ENCODE measurements at regions of chr4 and their contacts with region 1.

Region 1: DNA sequence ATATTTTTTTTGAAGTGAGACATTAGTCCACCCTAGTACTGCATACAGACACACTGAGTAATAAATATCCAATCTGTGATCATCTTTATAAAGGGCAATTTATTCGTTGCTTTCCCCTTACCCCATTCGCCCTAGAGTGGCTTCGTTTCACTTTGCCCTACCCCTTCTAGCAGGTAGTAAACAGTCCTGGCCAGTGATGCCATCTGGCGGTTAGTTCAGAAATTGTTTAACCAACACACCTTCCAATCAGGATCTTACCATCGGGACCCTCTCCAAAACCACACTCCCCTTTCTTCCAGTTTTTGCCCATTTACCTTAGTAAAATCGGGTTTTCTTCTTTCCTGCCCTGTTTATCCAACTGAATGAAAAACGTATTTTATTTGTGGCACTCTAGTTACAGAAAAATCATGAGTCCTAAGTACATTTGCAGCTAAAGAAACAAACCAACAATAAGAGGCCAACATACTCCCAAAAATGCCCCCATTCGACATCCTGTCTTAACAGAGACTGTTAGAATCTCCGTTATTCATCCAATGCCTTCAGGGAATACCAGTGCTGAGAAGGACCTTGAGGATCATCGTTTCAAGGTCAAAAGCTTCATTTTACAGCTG is 2.2 kb downstream of the PPA2 start:
- DNase-seq: peak; percentile 88
- H3K4me3 Mint-ChIP-seq: peak overlapping the region; percentile 96
- H3K27ac Mint-ChIP-seq: peak overlapping the region; percentile 98
- H3K4me1 Mint-ChIP-seq: peaks cover 44% of the 10 kb centered on the region
- H3K27me3 Mint-ChIP-seq: no peaks in the 10 kb centered on the region

Region 2: DNA sequence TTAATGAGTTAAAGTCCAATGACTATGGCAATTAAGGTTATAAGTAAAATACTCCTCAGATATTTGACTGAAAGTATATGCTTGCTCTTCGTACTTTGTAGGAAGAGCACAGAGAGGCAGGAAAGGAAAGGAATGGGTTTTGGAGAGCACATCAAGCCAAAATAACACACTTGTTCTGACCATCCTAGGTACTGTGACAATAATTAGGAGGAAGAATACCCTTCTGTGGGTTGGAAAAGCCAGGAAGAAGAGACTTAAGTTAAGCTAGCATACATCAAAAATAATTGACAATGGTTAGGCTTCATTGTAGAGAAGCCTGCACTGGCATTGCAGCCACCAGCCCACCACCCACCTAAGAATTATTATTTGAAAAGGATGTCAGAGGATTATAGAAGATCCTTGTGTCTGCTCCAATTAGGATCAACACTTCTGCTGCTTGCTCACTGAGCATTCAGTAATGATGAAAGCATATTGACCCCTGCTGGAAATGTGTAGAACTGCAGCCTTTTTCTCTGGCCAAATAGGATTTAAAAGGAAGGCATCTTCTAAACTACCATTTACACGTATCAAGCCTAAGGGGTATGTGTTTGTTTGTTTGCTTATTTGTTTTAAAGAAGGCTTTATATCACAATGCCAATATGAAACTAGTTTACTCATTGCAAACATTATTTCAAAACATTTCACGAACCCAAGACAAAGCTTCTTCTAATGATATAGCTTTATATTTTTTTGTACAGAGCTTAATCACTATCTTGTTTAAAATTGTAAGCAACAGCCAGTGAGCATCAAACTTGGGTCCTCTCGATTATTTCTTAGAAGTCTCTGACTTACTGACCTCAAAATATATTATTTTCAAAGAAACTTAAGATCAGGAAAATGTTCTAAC is 611.2 kb before region 1 on chr4:
- CTCF ChIA-PET with region 1: no interaction called
- intact Hi-C with region 1: loop called (anchors 5 kb)
- DNase-seq: peak; percentile 66
- H3K4me3 Mint-ChIP-seq: no peak overlapping the region
- H3K27ac Mint-ChIP-seq: no peak overlapping the region
- H3K4me1 Mint-ChIP-seq: no peaks in the 10 kb centered on the region
- H3K27me3 Mint-ChIP-seq: no peaks in the 10 kb centered on the region

Region 3: GRCh38 chr4:104966349-104967033 is 505.2 kb before region 1 on chr4:
- CTCF ChIA-PET with region 1: interaction called, 6 read pairs
- intact Hi-C with region 1: loop called (anchors 1 kb)
- DNase-seq: peak; percentile 73
- H3K4me3 Mint-ChIP-seq: no peak overlapping the region
- H3K27ac Mint-ChIP-seq: peak overlapping the region; percentile 82
- H3K4me1 Mint-ChIP-seq: peaks cover 12% of the 10 kb centered on the region
- H3K27me3 Mint-ChIP-seq: peaks cover 12% of the 10 kb centered on the region

Region 4: DNA sequence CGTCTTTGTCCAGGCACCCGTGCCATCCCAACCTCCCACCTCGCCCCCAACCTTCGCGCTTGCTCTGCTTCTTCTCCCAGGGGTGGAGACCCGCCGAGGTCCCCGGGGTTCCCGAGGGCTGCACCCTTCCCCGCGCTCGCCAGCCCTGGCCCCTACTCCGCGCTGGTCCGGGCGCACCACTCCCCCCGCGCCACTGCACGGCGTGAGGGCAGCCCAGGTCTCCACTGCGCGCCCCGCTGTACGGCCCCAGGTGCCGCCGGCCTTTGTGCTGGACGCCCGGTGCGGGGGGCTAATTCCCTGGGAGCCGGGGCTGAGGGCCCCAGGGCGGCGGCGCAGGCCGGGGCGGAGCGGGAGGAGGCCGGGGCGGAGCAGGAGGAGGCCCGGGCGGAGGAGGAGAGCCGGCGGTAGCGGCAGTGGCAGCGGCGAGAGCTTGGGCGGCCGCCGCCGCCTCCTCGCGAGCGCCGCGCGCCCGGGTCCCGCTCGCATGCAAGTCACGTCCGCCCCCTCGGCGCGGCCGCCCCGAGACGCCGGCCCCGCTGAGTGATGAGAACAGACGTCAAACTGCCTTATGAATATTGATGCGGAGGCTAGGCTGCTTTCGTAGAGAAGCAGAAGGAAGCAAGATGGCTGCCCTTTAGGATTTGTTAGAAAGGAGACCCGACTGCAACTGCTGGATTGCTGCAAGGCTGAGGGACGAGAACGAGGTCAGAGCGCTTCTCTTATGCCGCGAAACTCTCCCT is 325.2 kb before region 1 on chr4 and contains the start of gene TET2:
- CTCF ChIA-PET with region 1: interaction called, 23 read pairs
- intact Hi-C with region 1: loop called (anchors 1 kb)
- DNase-seq: peak; percentile 86
- H3K4me3 Mint-ChIP-seq: peak within 1 kb of the TSS; percentile 96
- H3K27ac Mint-ChIP-seq: peak within 1 kb of the TSS; percentile 97
- H3K4me1 Mint-ChIP-seq: peaks cover 35% of the 10 kb centered on the region
- H3K27me3 Mint-ChIP-seq: no peaks in the 10 kb centered on the region
- total RNA-seq, gene TET2: 36.0 to 36.1 TPM

Region 5: DNA sequence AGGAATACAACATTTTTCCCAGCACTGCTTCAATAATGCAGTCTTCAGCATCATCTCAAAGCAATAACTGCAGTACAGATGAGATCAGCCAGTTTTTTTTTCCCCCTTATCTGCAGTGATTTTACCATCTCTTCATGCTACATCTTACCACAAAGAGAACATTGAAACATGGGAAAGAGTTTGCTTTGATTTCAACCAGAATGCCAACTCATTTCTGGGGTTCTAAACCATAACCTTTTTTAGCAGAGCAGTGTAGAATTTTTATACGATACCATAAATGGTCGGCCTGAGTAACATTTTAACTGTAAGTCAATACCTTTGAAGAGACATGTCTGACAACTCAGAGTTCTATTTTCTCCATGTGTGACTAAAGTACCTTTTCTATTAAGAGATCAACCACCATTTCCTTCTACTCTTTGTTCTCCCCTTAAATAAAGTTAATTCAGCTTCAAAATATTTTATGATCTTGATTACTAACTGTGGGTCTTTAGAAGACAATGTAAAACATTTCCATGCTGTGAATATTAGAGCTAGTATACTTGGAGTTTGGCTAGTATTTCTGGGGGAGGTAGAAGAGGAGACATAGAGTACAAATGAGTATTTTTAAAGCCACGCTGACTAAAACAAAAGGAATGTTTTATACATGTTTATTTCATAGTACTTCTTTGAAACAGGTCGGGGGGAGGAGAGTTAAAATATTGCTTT is 255.9 kb before region 1 on chr4:
- CTCF ChIA-PET with region 1: interaction called, 4 read pairs
- intact Hi-C with region 1: loop called (anchors 1 kb)
- DNase-seq: no peak
- H3K4me3 Mint-ChIP-seq: peak overlapping the region; percentile 2
- H3K27ac Mint-ChIP-seq: peak overlapping the region; percentile 85
- H3K4me1 Mint-ChIP-seq: peaks cover 46% of the 10 kb centered on the region
- H3K27me3 Mint-ChIP-seq: no peaks in the 10 kb centered on the region

Region 6: GRCh38 chr4:105453550-105454205 is 18.0 kb before region 1 on chr4:
- CTCF ChIA-PET with region 1: interaction called, 9 read pairs
- intact Hi-C with region 1: loop called (anchors 1 kb)
- DNase-seq: peak; percentile 63
- H3K4me3 Mint-ChIP-seq: no peak overlapping the region
- H3K27ac Mint-ChIP-seq: peak overlapping the region; percentile 47
- H3K4me1 Mint-ChIP-seq: peaks cover 41% of the 10 kb centered on the region
- H3K27me3 Mint-ChIP-seq: no peaks in the 10 kb centered on the region

Region 7: GRCh38 chr4:106315968-106316772 is 844.5 kb after region 1 on chr4 and contains the starts of genes AIMP1 and TBCK:
- CTCF ChIA-PET with region 1: no interaction called
- intact Hi-C with region 1: loop called (anchors 1 kb)
- DNase-seq: peak; percentile 90
- H3K4me3 Mint-ChIP-seq: no peak within 1 kb of the TSS
- H3K27ac Mint-ChIP-seq: no peak within 1 kb of the TSS
- H3K4me1 Mint-ChIP-seq: peaks cover 45% of the 10 kb centered on the region
- H3K27me3 Mint-ChIP-seq: no peaks in the 10 kb centered on the region
- total RNA-seq, gene AIMP1: 49.7 to 52.0 TPM
- total RNA-seq, gene TBCK: 19.4 to 21.6 TPM

Measured in activated naive CD4-positive, alpha-beta T cell treated with anti-CD3 and anti-CD28 coated beads for 36 hours (primary cell).